ENCODE measurements at regions of chr4 and their contacts with region 1.

Region 1: GRCh38 chr4:10461091-10461849 is 4.0 kb upstream of the ZNF518B start:
- DNase-seq: peak; percentile 95
- H3K4me3 Mint-ChIP-seq: peak overlapping the region; percentile 84
- H3K27ac Mint-ChIP-seq: peak overlapping the region; percentile 22
- H3K4me1 Mint-ChIP-seq: peaks cover 30% of the 10 kb centered on the region
- H3K27me3 Mint-ChIP-seq: peaks cover 37% of the 10 kb centered on the region

Region 2: GRCh38 chr4:9602389-9602914 is 858.8 kb before region 1 on chr4:
- intact Hi-C with region 1: loop called (anchors 5 kb)
- DNase-seq: no peak
- H3K4me3 Mint-ChIP-seq: peak overlapping the region; percentile 10
- H3K27ac Mint-ChIP-seq: no peak overlapping the region
- H3K4me1 Mint-ChIP-seq: peaks cover 41% of the 10 kb centered on the region
- H3K27me3 Mint-ChIP-seq: no peaks in the 10 kb centered on the region

Region 3: DNA sequence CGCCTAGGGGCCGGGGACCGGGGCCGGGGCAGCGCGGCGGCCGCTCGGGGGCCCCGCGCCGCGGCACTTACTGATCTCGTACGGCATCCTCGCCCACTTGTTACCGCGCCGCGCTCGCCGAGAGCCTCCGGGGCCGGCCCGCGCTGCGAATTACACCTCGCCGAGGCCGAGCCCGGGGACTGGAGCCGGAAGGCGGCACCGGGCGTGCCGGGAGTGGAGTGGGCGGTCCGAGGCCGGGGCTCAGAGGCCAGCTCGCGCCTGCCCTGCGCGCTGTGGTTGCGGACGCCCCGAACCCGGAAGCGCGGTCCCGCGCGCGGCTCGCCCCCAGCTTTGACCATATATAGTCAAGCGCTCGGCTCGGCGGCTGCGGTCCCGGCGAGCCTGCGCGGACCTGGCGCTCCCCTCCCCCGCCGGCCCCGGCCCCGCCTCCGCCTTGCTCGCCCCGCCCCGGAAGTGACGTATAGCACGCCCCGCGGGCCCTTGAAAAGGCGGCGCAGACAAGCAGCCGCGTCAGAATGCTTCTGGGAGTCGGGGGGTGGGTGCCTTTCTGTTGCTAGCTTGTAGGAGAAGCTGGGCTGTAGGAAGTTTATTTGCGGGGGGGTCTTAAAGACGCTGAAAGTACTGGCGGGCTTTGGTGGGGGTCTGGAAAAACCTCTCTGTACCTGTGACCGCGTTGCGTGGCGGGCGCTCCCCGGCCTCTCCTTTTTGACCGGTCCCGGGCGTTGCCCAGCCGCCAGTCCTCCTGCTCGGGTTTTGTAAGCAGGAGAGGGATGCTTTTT is 344.5 kb before region 1 on chr4 and contains the start of gene WDR1:
- intact Hi-C with region 1: loop called (anchors 2 kb)
- DNase-seq: peak; percentile 97
- H3K4me3 Mint-ChIP-seq: peak within 1 kb of the TSS; percentile 98
- H3K27ac Mint-ChIP-seq: peak within 1 kb of the TSS; percentile 95
- H3K4me1 Mint-ChIP-seq: peaks cover 70% of the 10 kb centered on the region
- H3K27me3 Mint-ChIP-seq: no peaks in the 10 kb centered on the region
- total RNA-seq, gene WDR1: 369 and 376 TPM in 2 replicates

Region 4: DNA sequence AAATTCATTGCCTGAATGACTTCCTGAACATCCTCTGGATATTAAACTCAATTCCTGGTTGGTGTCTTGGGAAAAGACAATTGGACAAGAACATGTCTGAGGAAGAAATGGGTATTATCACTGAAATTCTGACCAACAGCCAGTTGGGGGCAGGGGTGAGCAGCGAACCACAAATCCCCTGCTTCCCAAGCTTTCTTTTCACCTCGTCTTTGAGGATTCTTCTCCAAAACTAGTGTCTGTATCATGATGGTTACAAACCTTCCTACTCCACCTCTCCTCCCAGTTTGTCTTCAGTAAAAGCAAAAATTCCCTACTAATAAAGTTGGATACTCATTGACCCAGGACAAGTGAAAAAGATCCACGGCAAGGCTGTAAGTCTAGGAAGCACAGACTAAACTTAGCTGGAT is 296.4 kb before region 1 on chr4:
- intact Hi-C with region 1: loop called (anchors 5 kb)
- DNase-seq: peak; percentile 64
- H3K4me3 Mint-ChIP-seq: no peak overlapping the region
- H3K27ac Mint-ChIP-seq: no peak overlapping the region
- H3K4me1 Mint-ChIP-seq: peaks cover 21% of the 10 kb centered on the region
- H3K27me3 Mint-ChIP-seq: peaks cover 2% of the 10 kb centered on the region

Region 5: DNA sequence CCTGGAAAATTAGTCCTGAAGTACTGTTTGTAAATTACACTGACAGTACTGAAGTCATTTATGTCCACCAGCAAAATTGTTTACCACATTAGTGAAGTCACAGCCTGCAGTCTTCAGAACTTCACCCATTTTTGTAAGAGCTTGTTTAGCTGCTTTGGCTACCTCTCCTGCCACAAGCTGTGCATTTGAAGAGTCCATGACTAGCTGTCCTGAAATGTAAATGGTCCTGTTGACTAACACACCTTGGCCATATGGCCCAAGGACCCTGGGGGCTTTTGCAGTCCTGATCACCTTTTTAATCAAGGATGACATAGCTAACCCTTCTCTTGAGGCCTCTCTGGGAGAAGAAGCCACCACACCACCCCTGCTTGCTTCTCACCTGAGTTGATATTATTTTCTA is 17.4 kb after region 1 on chr4:
- intact Hi-C with region 1: no loop called
- DNase-seq: no peak
- H3K4me3 Mint-ChIP-seq: no peak overlapping the region
- H3K27ac Mint-ChIP-seq: no peak overlapping the region
- H3K4me1 Mint-ChIP-seq: no peaks in the 10 kb centered on the region
- H3K27me3 Mint-ChIP-seq: peaks cover 8% of the 10 kb centered on the region